GM12878 (cell line): ENCODE measurements at regions of chr14 and their contacts with region 1.

Region 1: DNA sequence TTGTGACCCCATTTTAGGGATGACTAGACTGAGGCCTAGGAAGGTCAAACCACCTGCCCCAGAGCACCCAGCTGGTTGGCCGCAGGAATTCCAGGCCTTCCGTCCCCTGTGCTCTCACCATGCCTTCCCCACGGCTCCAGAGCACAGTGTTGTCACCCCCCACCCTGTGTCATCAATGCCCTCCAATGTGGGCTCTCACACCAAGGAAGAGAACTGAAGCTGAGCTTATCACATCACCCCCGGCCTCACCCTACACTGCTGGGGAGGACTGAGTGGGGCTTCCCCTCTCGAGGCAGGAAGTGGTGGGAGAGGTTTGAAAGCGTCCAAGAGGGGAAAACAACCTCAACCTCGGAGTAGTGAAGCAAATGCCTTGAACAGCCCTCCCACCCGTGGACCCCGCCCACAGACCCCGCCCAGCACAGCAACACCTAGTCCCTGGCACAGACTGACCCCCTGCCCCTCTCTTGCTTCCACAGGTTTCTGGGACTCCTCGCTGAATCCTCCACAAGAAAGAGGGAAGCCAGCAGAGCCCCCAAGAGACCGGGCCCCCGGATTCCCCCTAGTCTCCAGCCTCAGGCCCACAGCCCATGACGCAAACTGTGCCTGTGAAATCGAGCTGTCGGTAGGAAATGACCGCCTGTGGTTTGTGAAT is 97.2 kb downstream of the LGMN start:
- DNase-seq: peak; percentile 76
- ATAC-seq: peak; percentile 79
- H3K4me3 ChIP-seq: peak overlapping the region; percentile 66; the same call in 1 of the 2 replicates
- H3K27ac ChIP-seq: peak overlapping the region; percentile 89
- H3K4me1 ChIP-seq: peaks cover 33% of the 10 kb centered on the region
- H3K27me3 ChIP-seq: no peaks in the 10 kb centered on the region
- CTCF ChIP-seq: no peak
- EP300 ChIP-seq: peak; percentile 84 to 86; a peak in 3 of 4 replicates
- POLR2A ChIP-seq: peak; percentile 75
- RAD21 ChIP-seq: no peak

Region 2: DNA sequence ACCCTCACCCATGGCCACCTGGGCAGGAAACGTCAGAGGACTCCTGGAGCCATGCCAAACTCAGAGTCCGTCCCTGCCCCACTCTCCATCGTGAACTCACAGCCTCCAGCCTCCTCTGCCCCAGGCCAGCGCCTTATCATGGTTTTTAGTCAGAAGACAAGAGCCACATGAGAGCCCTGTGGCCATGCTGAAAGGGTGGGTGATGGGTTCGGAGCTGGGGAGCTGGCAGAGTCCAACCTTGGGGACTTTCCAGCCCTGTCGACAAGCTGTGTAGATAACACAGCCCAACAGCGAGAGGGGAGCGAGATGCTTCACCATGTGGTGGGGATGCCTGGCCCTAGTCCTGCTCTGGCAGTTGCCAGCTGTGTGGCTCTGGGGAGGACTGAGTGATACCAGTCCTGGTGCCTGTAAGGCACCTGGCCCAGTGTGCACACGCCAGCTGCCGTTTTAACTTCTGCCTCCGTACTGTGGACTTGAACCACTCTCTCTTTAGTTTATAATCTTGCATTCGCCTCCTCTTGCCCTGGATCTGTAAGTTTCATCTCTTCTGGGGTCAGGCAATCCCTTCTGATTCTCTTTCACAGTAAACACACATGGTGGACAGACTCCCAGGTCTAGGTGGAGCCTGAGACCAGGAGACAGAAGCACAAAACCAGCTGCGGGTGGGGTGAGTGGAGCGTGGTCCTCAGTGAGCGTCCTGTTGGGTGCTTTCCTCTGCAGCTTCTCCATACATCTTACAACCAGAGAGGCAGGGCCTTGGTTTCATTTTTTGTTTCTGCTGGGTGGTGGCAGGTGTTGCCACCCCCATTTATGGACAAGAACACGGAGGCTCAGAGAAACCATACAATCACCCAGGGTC is 82.4 kb before region 1 on chr14:
- CTCF ChIA-PET with region 1: interaction called, 3 read pairs
- POLR2A ChIA-PET with region 1: no interaction called
- RAD21 ChIA-PET with region 1: interaction called, 6 read pairs
- SMC1A ChIA-PET with region 1: interaction called, 20 read pairs
- in situ Hi-C with region 1: no loop called
- intact Hi-C with region 1: no loop called
- DNase-seq: peak; percentile 76
- ATAC-seq: peak; percentile 93
- H3K4me3 ChIP-seq: peak overlapping the region; percentile 11; the same call in 1 of the 2 replicates
- H3K27ac ChIP-seq: peak overlapping the region; percentile 88
- H3K4me1 ChIP-seq: peaks cover 31% of the 10 kb centered on the region
- H3K27me3 ChIP-seq: no peaks in the 10 kb centered on the region
- CTCF ChIP-seq: 0 out of 6 replicates have a peak, but pooled peaks of 1 of the 3 experiments have one; percentile 1
- EP300 ChIP-seq: no peak; a peak in 1 of 4 replicates
- POLR2A ChIP-seq: peak; percentile 42; the same call in 1 of the 2 replicates
- RAD21 ChIP-seq: 0 out of 2 replicates have a peak, but pooled peaks have one; percentile 10

Region 3: GRCh38 chr14:92612988-92613658 is 38.1 kb before region 1 on chr14:
- CTCF ChIA-PET with region 1: interaction called, 40 read pairs
- POLR2A ChIA-PET with region 1: interaction called, 8 read pairs
- RAD21 ChIA-PET with region 1: interaction called, 38 read pairs
- SMC1A ChIA-PET with region 1: interaction called, 38 read pairs
- in situ Hi-C with region 1: no loop called
- intact Hi-C with region 1: loop called (anchors 2 kb)
- DNase-seq: no peak
- ATAC-seq: peak; percentile 59
- H3K4me3 ChIP-seq: no peak overlapping the region
- H3K27ac ChIP-seq: no peak overlapping the region
- H3K4me1 ChIP-seq: peaks cover 8% of the 10 kb centered on the region
- H3K27me3 ChIP-seq: no peaks in the 10 kb centered on the region
- CTCF ChIP-seq: peak; percentile 90 to 91 (median 90)
- EP300 ChIP-seq: no peak
- POLR2A ChIP-seq: no peak
- RAD21 ChIP-seq: peak; percentile 81

Region 4: DNA sequence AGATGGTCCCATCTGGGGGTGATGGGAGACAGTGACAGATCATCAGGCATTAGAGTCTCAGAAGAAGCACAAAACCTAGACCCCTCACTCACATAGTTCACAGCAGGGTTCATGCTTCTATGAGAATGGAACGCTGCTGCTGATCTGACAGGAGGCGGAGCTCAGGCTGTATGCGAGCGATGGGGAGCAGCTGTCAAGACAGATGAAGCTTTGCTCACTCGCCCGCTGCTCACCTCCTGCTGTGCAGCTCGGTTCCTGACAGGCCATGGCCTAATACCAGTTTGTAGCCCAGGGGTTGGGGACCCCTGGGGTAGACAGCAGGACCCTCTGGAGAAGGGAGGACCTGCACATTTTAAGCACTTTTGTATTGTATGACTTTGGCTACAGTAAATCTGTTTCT is 14.0 kb before region 1 on chr14:
- CTCF ChIA-PET with region 1: interaction called, 5 read pairs
- POLR2A ChIA-PET with region 1: interaction called, 12 read pairs
- RAD21 ChIA-PET with region 1: interaction called, 25 read pairs
- SMC1A ChIA-PET with region 1: interaction called, 30 read pairs
- in situ Hi-C with region 1: no loop called
- intact Hi-C with region 1: no loop called
- DNase-seq: no peak
- ATAC-seq: no peak
- H3K4me3 ChIP-seq: no peak overlapping the region
- H3K27ac ChIP-seq: no peak overlapping the region
- H3K4me1 ChIP-seq: peaks cover 3% of the 10 kb centered on the region; the same call in 1 of the 2 replicates
- H3K27me3 ChIP-seq: no peaks in the 10 kb centered on the region
- CTCF ChIP-seq: no peak
- EP300 ChIP-seq: no peak
- POLR2A ChIP-seq: no peak
- RAD21 ChIP-seq: no peak

Region 5: GRCh38 chr14:92665661-92666110 is 14.5 kb after region 1 on chr14:
- CTCF ChIA-PET with region 1: interaction called, 6 read pairs
- POLR2A ChIA-PET with region 1: interaction called, 25 read pairs
- RAD21 ChIA-PET with region 1: interaction called, 14 read pairs
- SMC1A ChIA-PET with region 1: interaction called, 7 read pairs
- in situ Hi-C with region 1: no loop called
- intact Hi-C with region 1: no loop called
- DNase-seq: no peak
- ATAC-seq: peak; percentile 20
- H3K4me3 ChIP-seq: no peak overlapping the region
- H3K27ac ChIP-seq: peak overlapping the region; percentile 43
- H3K4me1 ChIP-seq: peaks cover 27% of the 10 kb centered on the region
- H3K27me3 ChIP-seq: no peaks in the 10 kb centered on the region
- CTCF ChIP-seq: no peak
- EP300 ChIP-seq: no peak
- POLR2A ChIP-seq: no peak
- RAD21 ChIP-seq: no peak

Region 6: DNA sequence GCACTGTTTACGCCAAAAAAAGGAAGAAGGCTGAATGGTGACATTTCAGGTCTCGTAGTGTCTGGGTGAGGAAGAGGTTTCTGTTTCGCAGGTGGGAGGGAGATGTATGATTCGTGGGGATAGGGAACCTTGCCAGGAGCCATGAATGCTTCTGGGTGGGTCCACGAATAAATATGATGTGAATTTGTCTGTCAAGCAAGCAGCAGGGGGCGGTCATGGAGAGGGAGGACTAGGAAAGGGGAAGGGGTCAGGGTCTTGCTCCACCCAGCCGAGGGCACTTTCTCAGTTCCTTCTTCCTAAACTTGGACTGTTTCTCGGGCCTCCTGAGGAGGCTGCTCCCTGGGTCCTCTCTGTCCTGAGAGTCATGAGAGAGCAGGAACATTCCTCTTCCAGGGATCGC is 24.7 kb after region 1 on chr14:
- CTCF ChIA-PET with region 1: interaction called, 25 read pairs
- POLR2A ChIA-PET with region 1: interaction called, 21 read pairs
- RAD21 ChIA-PET with region 1: interaction called, 67 read pairs
- SMC1A ChIA-PET with region 1: interaction called, 58 read pairs
- in situ Hi-C with region 1: no loop called
- intact Hi-C with region 1: loop called (anchors 1 kb)
- DNase-seq: no peak
- ATAC-seq: peak; percentile 3
- H3K4me3 ChIP-seq: peak overlapping the region; percentile 39; the same call in 1 of the 2 replicates
- H3K27ac ChIP-seq: peak overlapping the region; percentile 74
- H3K4me1 ChIP-seq: peaks cover 39% of the 10 kb centered on the region
- H3K27me3 ChIP-seq: no peaks in the 10 kb centered on the region
- CTCF ChIP-seq: no peak
- EP300 ChIP-seq: no peak
- POLR2A ChIP-seq: no peak
- RAD21 ChIP-seq: no peak

Region 7: GRCh38 chr14:92680781-92681650 is 29.8 kb after region 1 on chr14:
- CTCF ChIA-PET with region 1: interaction called, 25 read pairs
- POLR2A ChIA-PET with region 1: interaction called, 21 read pairs
- RAD21 ChIA-PET with region 1: interaction called, 67 read pairs
- SMC1A ChIA-PET with region 1: interaction called, 58 read pairs
- in situ Hi-C with region 1: no loop called
- intact Hi-C with region 1: loop called (anchors 1 kb)
- DNase-seq: no peak
- ATAC-seq: peak; percentile 52
- H3K4me3 ChIP-seq: no peak overlapping the region
- H3K27ac ChIP-seq: no peak overlapping the region
- H3K4me1 ChIP-seq: peaks cover 28% of the 10 kb centered on the region
- H3K27me3 ChIP-seq: no peaks in the 10 kb centered on the region
- CTCF ChIP-seq: peak; percentile 84 to 91 (median 90)
- EP300 ChIP-seq: no peak
- POLR2A ChIP-seq: no peak
- RAD21 ChIP-seq: peak; percentile 97